ENCODE measurements at regions of chr17 and their contacts with region 1.

Region 1: GRCh38 chr17:38702166-38702899 is 2.7 kb upstream of the MLLT6 start:
- DNase-seq: peak; percentile 92
- H3K4me3 Mint-ChIP-seq: peak overlapping the region; percentile 100
- H3K27ac Mint-ChIP-seq: peak overlapping the region; percentile 100
- H3K4me1 Mint-ChIP-seq: peaks cover 42% of the 10 kb centered on the region
- H3K27me3 Mint-ChIP-seq: no peaks in the 10 kb centered on the region

Region 2: GRCh38 chr17:38509008-38509771 is 193.1 kb before region 1 on chr17:
- CTCF ChIA-PET with region 1: no interaction called
- POLR2A ChIA-PET with region 1: no interaction called
- intact Hi-C with region 1: no loop called
- DNase-seq: peak; percentile 87
- H3K4me3 Mint-ChIP-seq: peak overlapping the region; percentile 71
- H3K27ac Mint-ChIP-seq: no peak overlapping the region
- H3K4me1 Mint-ChIP-seq: peaks cover 9% of the 10 kb centered on the region
- H3K27me3 Mint-ChIP-seq: peaks cover 39% of the 10 kb centered on the region

Region 3: DNA sequence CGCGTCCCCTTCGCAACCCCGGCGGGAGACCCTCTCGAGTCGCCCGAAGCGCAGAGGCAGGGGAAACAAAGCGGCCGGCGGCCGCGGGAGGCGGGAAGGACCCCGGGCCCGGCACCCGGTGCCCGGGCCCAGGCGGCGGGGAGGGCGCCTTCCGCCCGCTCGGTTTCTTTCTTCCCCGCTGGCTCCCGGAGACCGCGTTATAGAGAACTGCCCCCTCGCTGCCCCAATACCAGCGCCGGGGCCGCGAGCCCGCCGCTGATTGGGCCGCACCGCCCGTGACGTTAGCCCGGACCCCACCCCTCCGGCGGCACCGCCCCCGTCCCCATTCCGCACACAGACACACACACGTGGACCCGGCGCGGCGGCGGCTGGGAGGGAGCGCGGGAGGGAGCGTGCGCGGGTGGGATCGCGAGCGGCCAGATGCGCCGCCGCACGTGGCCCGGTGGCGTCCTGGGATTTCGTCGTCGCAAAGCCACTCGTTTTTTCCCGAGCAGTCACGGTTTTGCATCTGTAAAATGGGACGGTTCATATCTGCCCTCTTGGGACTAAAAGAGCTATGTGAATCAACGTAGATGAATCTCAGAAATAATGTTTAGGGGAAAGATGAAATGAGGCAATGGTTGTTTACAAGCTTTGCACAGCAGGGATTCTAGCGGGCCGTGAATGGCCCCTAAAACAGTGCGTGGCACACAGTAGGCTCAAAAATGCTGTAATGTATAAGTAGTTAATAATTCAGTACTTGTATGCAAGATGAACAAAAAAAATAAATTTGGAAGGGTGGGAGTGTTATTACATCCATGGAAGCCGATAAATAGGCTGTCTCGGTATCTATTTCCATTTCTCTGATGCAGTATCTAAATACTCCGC is 27.4 kb before region 1 on chr17 and contains the start of gene EPOP:
- CTCF ChIA-PET with region 1: interaction called, 51 read pairs
- POLR2A ChIA-PET with region 1: interaction called, 100 read pairs
- intact Hi-C with region 1: loop called (anchors 1 kb)
- DNase-seq: peak; percentile 94
- H3K4me3 Mint-ChIP-seq: peak within 1 kb of the TSS; percentile 62
- H3K27ac Mint-ChIP-seq: peak within 1 kb of the TSS; percentile 93
- H3K4me1 Mint-ChIP-seq: peaks cover 46% of the 10 kb centered on the region
- H3K27me3 Mint-ChIP-seq: peaks cover 10% of the 10 kb centered on the region
- total RNA-seq, gene EPOP: 37.1 to 38.0 TPM

Region 4: DNA sequence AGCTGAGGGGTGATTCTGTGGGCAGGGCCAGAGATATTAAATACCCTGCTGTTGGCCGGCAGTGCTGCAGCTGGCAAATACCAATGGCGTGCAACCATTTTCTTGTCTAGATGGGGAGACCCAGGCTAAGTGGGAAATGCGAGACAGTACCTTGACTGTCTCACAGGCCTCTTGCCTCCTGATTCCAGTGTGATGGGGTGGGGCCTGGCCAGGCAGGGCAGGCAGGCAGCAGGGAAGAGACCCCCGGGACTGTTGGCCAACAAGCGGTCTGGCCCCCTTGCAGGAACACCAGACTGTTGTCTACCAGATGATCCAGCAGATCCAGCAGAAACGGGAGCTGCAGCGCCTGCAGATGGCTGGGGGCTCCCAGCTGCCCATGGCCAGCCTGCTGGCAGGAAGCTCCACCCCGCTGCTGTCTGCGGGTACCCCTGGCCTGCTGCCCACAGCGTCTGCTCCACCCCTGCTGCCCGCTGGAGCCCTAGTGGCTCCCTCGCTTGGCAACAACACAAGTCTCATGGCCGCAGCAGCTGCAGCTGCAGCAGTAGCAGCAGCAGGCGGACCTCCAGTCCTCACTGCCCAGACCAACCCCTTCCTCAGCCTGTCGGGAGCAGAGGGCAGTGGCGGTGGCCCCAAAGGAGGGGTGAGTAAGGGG is 22.1 kb after region 1 on chr17:
- CTCF ChIA-PET with region 1: interaction called, 9 read pairs
- POLR2A ChIA-PET with region 1: interaction called, 116 read pairs
- intact Hi-C with region 1: loop called (anchors 1 kb)
- DNase-seq: no peak
- H3K4me3 Mint-ChIP-seq: no peak overlapping the region
- H3K27ac Mint-ChIP-seq: peak overlapping the region; percentile 60
- H3K4me1 Mint-ChIP-seq: peaks cover 64% of the 10 kb centered on the region
- H3K27me3 Mint-ChIP-seq: no peaks in the 10 kb centered on the region

Region 5: GRCh38 chr17:38735161-38735997 is 33.0 kb after region 1 on chr17:
- CTCF ChIA-PET with region 1: interaction called, 32 read pairs
- POLR2A ChIA-PET with region 1: interaction called, 116 read pairs
- intact Hi-C with region 1: no loop called
- DNase-seq: peak; percentile 78
- H3K4me3 Mint-ChIP-seq: no peak overlapping the region
- H3K27ac Mint-ChIP-seq: no peak overlapping the region
- H3K4me1 Mint-ChIP-seq: peaks cover 42% of the 10 kb centered on the region
- H3K27me3 Mint-ChIP-seq: peaks cover 6% of the 10 kb centered on the region

Region 6: DNA sequence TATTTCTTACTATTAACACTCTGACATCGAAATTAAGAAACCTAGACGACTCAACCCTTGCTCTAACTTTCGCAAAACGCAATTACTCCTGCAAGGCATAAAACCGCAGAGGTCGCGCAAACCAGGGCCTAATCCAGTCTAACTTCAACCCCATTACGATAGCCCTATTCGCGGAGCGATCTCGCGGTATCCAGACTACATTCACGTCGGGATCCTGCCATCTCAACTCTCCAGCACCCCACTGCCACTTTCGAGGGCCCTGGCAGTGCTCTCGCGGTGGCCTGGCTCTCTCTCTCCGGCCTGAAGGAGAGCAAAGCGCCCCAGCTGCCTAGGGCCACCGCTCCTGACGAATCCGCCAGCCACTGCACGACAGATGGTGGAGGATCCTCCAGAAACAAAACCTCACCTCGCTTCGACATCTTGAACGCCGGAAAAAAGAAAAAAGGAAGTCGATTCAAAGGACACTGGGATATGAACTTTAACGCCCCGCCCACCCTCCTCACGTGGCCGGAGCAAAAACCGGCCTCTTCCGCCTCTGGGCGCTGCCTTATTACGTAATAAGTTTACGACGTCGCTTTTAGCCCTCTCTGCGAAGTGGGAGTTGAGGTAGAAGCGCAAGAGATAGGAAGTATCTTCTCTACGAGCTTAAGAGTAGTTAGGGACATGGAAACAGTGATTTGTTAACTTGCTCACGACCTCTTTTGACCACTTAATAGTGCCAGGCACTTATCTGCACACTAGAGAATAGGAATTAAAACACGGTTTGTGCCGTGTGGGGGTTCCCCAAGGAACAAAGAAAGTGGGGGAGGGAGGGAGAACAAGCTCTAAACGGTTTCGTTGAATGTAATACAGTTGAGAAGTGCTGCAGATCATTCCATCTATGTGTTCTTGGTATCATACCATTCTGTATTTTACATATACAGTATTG is 151.2 kb after region 1 on chr17 and contains the start of gene RPL23:
- CTCF ChIA-PET with region 1: no interaction called
- POLR2A ChIA-PET with region 1: no interaction called
- intact Hi-C with region 1: loop called (anchors 5 kb)
- DNase-seq: peak; percentile 95
- H3K4me3 Mint-ChIP-seq: peak within 1 kb of the TSS; percentile 99
- H3K27ac Mint-ChIP-seq: peak within 1 kb of the TSS; percentile 99
- H3K4me1 Mint-ChIP-seq: peaks cover 38% of the 10 kb centered on the region
- H3K27me3 Mint-ChIP-seq: no peaks in the 10 kb centered on the region
- total RNA-seq, gene RPL23: 1,774 to 1,791 TPM